ENCODE measurements at regions of chr4 and their contacts with region 1.

Region 1: GRCh38 chr4:176340871-176341685 is 21.3 kb downstream of the SPCS3 start:
- DNase-seq: no peak
- H3K4me3 ChIP-seq: no peak overlapping the region
- H3K27ac ChIP-seq: no peak overlapping the region
- H3K4me1 ChIP-seq: peaks cover 0 to 13% (median 5%) of the 10 kb centered on the region in 6 donors
- H3K27me3 ChIP-seq: no peaks in the 10 kb centered on the region
- CTCF ChIP-seq: peak in 10 of 11 experiments; percentile 29 to 67 (median 44)
- POLR2A ChIP-seq: no peak

Region 2: GRCh38 chr4:175953960-175954521 is 387.0 kb before region 1 on chr4:
- intact Hi-C with region 1: loop called (anchors 10 kb)
- DNase-seq: no peak
- H3K4me3 ChIP-seq: no peak overlapping the region
- H3K27ac ChIP-seq: no peak overlapping the region
- H3K4me1 ChIP-seq: no peaks in the 10 kb centered on the region
- H3K27me3 ChIP-seq: no peaks in the 10 kb centered on the region
- CTCF ChIP-seq: peak in 4 of 11 experiments; percentile 11 to 44 (median 19)
- POLR2A ChIP-seq: no peak

Region 3: GRCh38 chr4:176034499-176034898 is 306.6 kb before region 1 on chr4:
- intact Hi-C with region 1: loop called (anchors 10 kb)
- DNase-seq: no peak
- H3K4me3 ChIP-seq: no peak overlapping the region
- H3K27ac ChIP-seq: no peak overlapping the region
- H3K4me1 ChIP-seq: no peaks in the 10 kb centered on the region
- H3K27me3 ChIP-seq: no peaks in the 10 kb centered on the region
- CTCF ChIP-seq: peak in 7 of 11 experiments; percentile 8 to 38 (median 30)
- POLR2A ChIP-seq: no peak

Region 4: DNA sequence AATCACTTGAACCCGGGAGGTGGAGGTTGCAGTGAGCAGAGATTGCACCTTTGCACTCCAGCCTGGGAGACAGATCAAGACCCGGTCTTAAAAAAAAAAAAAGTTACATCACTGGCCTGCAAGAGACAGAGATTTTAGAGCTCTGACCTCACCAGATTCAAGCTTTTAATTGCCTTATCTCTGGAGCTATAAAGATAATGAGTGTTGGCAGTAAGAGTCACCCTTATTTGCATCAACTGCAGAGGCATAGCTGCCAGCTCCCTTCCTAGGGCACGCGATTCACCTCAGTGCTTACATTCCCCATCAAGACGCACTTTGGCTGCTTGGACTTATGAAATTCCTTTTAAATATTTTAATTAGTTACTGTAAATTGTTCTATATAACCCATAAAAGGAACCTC is 133.2 kb before region 1 on chr4:
- intact Hi-C with region 1: no loop called
- DNase-seq: no peak
- H3K4me3 ChIP-seq: no peak overlapping the region
- H3K27ac ChIP-seq: no peak overlapping the region
- H3K4me1 ChIP-seq: no peaks in the 10 kb centered on the region
- H3K27me3 ChIP-seq: peaks cover 0 to 29% (median 0%) of the 10 kb centered on the region in 7 donors
- CTCF ChIP-seq: no peak
- POLR2A ChIP-seq: no peak

Region 5: GRCh38 chr4:176286728-176287127 is 54.4 kb before region 1 on chr4:
- intact Hi-C with region 1: no loop called
- DNase-seq: no peak
- H3K4me3 ChIP-seq: no peak overlapping the region
- H3K27ac ChIP-seq: no peak overlapping the region
- H3K4me1 ChIP-seq: no peaks in the 10 kb centered on the region
- H3K27me3 ChIP-seq: no peaks in the 10 kb centered on the region
- CTCF ChIP-seq: no peak
- POLR2A ChIP-seq: no peak

Region 6: GRCh38 chr4:176593943-176594342 is 252.9 kb after region 1 on chr4:
- intact Hi-C with region 1: no loop called
- DNase-seq: no peak
- H3K4me3 ChIP-seq: no peak overlapping the region
- H3K27ac ChIP-seq: no peak overlapping the region
- H3K4me1 ChIP-seq: no peaks in the 10 kb centered on the region
- H3K27me3 ChIP-seq: no peaks in the 10 kb centered on the region
- CTCF ChIP-seq: no peak
- POLR2A ChIP-seq: no peak